PC-3 (cell line): ENCODE measurements at regions of chr3 and their contacts with region 1.

Region 1: DNA sequence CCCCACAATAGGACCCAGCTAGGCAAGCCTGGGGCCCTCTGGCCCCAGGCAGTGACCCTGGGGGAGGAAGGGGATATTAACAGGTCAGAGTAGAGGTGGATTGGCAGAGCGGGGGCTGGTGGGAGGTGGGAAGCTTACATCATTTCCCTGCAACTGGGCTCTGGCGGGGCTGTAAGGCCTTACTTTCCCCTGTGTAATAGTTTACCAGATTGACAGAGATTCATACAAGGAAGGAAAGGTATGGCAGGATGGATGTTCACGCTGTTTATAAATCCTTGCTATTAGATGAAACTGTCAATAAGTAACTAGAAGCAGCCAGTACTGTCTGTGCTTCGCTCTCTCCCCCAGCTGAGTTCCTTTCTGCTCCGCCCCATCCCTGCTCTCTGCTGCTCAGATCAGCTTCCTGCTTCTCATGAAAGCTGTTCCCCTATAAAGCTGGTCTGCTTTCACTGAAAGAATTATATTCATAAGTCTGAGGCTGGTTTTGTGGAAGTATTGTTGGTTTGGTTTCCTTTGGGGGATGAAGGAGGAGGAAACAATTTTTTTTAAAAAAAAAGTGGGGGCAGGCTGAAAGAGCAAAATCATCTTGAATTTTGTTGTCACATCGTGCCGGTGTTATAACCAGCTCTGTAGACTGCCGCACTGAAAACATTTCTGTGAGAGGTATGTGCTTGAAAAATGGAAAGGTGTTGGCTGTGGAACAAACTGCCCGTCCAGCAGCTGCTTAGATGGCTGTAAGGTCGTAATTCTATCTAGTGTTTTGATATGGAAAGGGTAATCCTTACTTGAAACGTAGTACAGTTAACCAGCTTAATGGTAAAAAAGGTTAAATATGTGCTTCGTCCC is 76.4 kb downstream of the BBX start:
- DNase-seq: peak; percentile 34
- ATAC-seq: peak; percentile 95
- H3K4me3 ChIP-seq: peak overlapping the region; percentile 59
- H3K27ac ChIP-seq: peak overlapping the region; percentile 0; the same call in 1 of the 2 replicates
- H3K4me1 ChIP-seq: peaks cover 15% of the 10 kb centered on the region
- H3K27me3 ChIP-seq: no peaks in the 10 kb centered on the region
- CTCF ChIP-seq: no peak

Region 2: GRCh38 chr3:106814231-106814630 is 784.9 kb before region 1 on chr3:
- CTCF ChIA-PET with region 1: no interaction called
- POLR2A ChIA-PET with region 1: no interaction called
- intact Hi-C with region 1: loop called (anchors 5 kb)
- DNase-seq: no peak
- ATAC-seq: no peak
- H3K4me3 ChIP-seq: no peak overlapping the region
- H3K27ac ChIP-seq: no peak overlapping the region
- H3K4me1 ChIP-seq: no peaks in the 10 kb centered on the region
- H3K27me3 ChIP-seq: no peaks in the 10 kb centered on the region
- CTCF ChIP-seq: no peak

Region 3: DNA sequence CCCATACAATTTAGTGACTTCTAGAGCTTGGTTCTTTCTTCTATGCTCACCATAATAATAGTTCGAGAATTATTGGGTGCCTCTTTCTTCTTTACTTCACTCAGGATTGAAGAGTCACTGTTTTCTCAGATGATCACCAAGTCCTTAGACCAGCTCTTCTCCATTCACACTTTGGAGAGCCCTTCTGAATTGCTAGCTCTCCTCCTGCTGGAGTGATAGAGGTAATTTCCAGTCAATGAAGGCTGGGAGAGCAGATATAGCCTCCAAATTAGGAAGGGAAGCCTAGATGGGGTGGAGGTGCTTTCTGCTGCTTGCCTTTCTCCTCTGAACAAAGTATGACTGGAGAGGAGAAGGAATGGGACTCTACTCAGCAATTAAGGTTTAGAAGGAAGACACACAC is 87.0 kb before region 1 on chr3:
- CTCF ChIA-PET with region 1: no interaction called
- POLR2A ChIA-PET with region 1: no interaction called
- intact Hi-C with region 1: no loop called
- DNase-seq: peak; percentile 19
- ATAC-seq: peak; percentile 62
- H3K4me3 ChIP-seq: no peak overlapping the region
- H3K27ac ChIP-seq: no peak overlapping the region
- H3K4me1 ChIP-seq: no peaks in the 10 kb centered on the region
- H3K27me3 ChIP-seq: no peaks in the 10 kb centered on the region
- CTCF ChIP-seq: peak; percentile 22; the same call in 1 of the 2 replicates